ENCODE measurements at regions of chr1 and their contacts with region 1.

Region 1: GRCh38 chr1:117758444-117759316 is 152.8 kb downstream of the TENT5C start:
- DNase-seq: peak; percentile 69
- H3K4me3 ChIP-seq: peak overlapping the region; percentile 51
- H3K27ac ChIP-seq: no peak overlapping the region
- H3K27me3 ChIP-seq: no peaks in the 10 kb centered on the region
- CTCF ChIP-seq: peak; percentile 87

Region 2: DNA sequence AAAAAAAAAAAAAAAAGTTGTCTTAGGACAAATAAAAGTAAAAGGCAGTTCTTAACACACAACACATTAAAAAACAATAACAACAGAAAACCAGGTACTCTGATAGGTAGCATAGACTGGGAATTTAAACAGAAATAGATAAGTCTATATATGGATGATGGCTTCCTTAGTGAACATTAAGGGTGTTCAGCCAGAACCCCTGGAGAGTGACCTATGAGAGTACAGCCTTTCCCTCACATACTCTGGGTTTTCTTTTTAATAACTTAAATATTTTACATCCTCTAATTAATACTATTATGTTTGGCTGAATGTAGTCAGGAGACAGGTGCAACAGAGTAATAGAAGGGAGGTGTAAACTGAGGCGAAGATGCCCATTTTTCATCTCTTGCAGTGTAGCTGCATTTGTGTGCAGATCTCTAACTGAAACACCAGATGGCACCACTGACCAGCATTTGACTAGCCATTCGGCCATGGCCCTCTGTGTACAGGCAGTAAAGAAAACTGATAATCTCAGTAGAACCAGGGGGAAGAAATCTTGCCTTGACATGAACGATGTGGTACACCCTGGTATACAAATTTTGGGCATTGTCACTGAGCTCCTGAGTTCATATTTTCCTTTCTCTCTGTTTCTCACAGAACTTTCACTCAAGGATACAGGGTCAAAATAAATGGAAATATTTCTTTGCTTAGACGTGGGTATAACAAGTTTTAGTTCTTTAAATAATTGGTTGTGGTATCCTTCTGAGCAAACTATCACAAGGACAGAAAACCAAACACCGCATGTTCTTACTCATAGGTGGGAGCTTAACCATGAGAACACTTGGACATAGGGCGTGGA is 690.9 kb before region 1 on chr1:
- CTCF ChIA-PET with region 1: interaction called, 12 read pairs
- POLR2A ChIA-PET with region 1: no interaction called
- DNase-seq: peak; percentile 41
- H3K4me3 ChIP-seq: no peak overlapping the region
- H3K27ac ChIP-seq: no peak overlapping the region
- H3K27me3 ChIP-seq: no peaks in the 10 kb centered on the region
- CTCF ChIP-seq: peak; percentile 90

Region 3: GRCh38 chr1:117534995-117535467 is 223.6 kb before region 1 on chr1:
- CTCF ChIA-PET with region 1: interaction called, 175 read pairs
- POLR2A ChIA-PET with region 1: no interaction called
- DNase-seq: peak; percentile 29
- H3K4me3 ChIP-seq: no peak overlapping the region
- H3K27ac ChIP-seq: no peak overlapping the region
- H3K27me3 ChIP-seq: no peaks in the 10 kb centered on the region
- CTCF ChIP-seq: peak; percentile 73

Region 4: DNA sequence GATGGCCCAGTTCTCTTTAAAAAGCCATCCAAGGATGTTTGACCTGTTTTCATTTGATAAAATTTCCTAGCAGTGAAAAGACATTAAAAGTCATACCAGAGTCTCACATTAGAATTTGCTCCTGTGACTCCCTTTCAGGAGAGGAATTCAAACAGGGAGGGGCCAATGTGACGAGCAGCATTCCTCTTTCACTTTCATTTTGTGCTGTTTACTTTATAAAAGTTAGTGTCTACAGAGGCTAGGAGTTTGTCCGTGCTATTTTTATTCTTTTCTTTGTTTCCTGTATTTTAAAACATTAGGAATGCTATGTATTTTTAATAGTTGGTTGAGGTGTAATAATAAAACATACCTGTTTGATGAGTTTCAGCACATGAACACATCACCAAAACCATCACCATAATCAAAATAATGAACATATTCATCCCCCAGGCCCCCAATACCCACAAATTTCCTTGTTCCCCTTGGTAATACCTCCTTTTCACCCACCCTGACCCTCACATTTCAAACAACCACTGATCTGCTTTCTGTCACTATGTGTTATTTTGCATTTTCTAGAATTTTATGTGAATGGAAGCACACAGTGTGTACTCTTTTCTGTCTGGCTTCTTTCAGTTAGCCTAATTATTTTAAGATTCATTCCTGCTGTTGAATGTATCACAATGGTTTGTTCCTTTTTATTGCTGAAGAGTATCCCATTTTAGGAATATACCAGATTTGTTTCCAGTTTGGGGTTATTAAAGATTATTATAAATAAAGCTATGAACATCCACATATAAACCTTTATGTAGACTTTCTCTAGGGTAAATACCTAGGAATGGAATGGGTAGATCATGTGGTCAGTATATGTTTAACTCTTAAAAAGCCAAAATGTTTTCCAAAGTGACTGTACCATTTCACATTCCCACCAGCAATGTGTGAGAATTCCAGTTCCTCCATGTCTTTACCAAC is 23.4 kb before region 1 on chr1:
- CTCF ChIA-PET with region 1: interaction called, 25 read pairs
- POLR2A ChIA-PET with region 1: interaction called, 3 read pairs
- DNase-seq: no peak
- H3K4me3 ChIP-seq: peak overlapping the region; percentile 12; the same call in 1 of the 2 replicates
- H3K27ac ChIP-seq: no peak overlapping the region
- H3K27me3 ChIP-seq: no peaks in the 10 kb centered on the region
- CTCF ChIP-seq: no peak

Region 5: GRCh38 chr1:117780687-117781475 is 22.2 kb after region 1 on chr1:
- CTCF ChIA-PET with region 1: interaction called, 14 read pairs
- POLR2A ChIA-PET with region 1: no interaction called
- DNase-seq: no peak
- H3K4me3 ChIP-seq: no peak overlapping the region
- H3K27ac ChIP-seq: no peak overlapping the region
- H3K27me3 ChIP-seq: no peaks in the 10 kb centered on the region
- CTCF ChIP-seq: no peak

Region 6: GRCh38 chr1:117821782-117822447 is 63.2 kb after region 1 on chr1:
- CTCF ChIA-PET with region 1: interaction called, 24 read pairs
- POLR2A ChIA-PET with region 1: no interaction called
- DNase-seq: peak; percentile 97
- H3K4me3 ChIP-seq: no peak overlapping the region
- H3K27ac ChIP-seq: peak overlapping the region; percentile 99
- H3K27me3 ChIP-seq: no peaks in the 10 kb centered on the region
- CTCF ChIP-seq: no peak